ENCODE measurements at regions of chr15 and their contacts with region 1.

Region 1: DNA sequence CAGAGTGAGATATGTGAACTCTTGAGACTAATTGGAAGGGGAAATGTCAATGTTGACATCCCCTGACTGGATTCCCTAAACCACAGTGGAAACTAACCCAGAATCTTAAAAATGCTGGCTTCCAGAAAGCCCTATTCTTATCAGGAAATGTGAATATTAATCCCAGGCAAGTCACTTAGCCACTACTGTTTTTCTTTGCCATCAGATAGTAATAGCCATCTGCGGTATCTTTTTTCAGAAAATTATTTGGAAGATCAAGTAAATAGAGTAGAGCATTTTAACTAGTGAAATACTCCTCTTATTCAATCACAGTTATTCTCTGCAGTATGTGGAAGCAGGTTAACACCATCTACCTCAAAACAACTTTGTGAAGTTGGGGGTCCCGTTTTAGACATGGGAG is 318.9 kb downstream of the RORA start:
- DNase-seq: no peak
- H3K4me3 ChIP-seq: no peak overlapping the region
- H3K27me3 ChIP-seq: no peaks in the 10 kb centered on the region
- CTCF ChIP-seq: no peak

Region 2: GRCh38 chr15:60899322-60899966 is 10.8 kb before region 1 on chr15:
- CTCF ChIA-PET with region 1: no interaction called
- POLR2A ChIA-PET with region 1: no interaction called
- DNase-seq: no peak
- H3K4me3 ChIP-seq: no peak overlapping the region
- H3K27me3 ChIP-seq: no peaks in the 10 kb centered on the region
- CTCF ChIP-seq: no peak

Region 3: DNA sequence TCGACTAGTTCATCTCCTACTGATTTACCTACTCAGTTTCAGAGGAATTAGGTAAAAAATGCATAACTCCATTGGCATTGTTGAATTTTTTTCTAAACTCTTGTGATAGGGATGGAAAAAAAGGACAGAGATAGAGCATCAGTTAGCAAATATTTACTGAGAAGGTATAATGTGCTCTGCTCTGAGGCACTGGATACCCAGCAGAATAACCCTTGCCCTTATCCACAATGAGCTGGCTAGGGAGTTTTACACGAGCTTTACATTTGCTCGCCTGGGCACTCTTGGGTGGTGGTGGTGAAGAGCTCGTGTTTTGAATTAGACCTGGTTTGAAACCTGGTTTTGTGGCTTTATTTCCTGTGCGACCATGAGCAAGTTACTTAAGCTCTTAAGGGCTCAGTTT is 169.3 kb after region 1 on chr15:
- CTCF ChIA-PET with region 1: no interaction called
- POLR2A ChIA-PET with region 1: interaction called, 16 read pairs
- DNase-seq: no peak
- H3K4me3 ChIP-seq: no peak overlapping the region
- H3K27me3 ChIP-seq: no peaks in the 10 kb centered on the region
- CTCF ChIP-seq: no peak